ENCODE measurements at regions of chr16 and their contacts with region 1.

Region 1: DNA sequence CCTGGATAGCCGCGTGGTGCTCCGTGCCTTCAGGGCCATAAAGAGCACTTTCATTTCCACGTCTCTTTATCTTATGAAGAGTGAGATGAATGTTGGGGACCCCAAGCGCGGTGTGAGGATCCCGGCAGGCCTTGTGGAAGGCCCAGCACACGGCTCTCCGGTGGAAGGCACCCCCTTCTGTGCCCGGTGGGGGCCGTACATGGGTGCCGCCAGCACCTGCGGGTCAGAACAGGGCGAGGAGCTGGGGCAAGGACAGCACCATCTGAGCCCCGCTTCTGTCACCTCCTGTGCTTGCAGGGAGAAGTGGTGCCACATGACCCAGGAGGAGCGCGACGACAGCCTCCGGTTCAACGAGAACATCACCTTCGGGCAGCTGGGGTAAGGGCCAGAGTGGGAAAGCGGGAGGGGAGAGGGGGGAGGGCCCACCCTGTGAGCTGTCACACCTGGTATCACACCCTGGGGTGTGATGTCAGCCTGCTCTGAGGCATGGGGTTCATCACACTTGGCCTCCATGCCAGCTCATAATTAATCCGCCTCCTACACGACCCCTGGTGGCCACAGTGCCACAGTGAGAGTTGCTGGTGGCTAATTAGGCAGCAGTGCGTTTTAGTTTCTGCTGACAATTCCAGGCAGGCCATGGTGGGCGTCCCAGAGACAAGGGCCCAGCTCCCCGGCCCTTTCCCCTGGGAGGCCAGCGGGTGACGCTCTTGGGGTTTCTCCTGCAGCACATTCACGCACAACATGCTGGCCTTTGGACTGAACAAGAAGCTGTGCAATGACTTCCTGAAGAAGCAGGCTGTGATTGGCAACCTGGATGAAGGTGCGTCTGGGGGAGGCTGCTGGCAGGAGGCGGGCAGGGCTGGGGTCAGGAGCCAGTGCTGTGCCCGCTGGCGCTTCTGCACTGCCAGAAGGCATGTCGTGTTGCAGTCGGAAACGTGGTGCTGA is 25.7 kb downstream of the CIBAR2 start:
- DNase-seq: peak; percentile 70 to 80 (median 75)
- H3K4me3 ChIP-seq: no peak overlapping the region
- H3K4me3 Mint-ChIP-seq: no peak overlapping the region
- H3K27ac ChIP-seq: no peak overlapping the region
- H3K27ac Mint-ChIP-seq: peak overlapping the region in 5 of 7 donors; percentile 24 to 62 (median 41)
- H3K4me1 ChIP-seq: no peaks in the 10 kb centered on the region
- H3K4me1 Mint-ChIP-seq: peaks cover 2 to 11% (median 8%) of the 10 kb centered on the region in 4 donors
- H3K27me3 ChIP-seq: no peaks in the 10 kb centered on the region
- H3K27me3 Mint-ChIP-seq: no peaks in the 10 kb centered on the region

Region 2: DNA sequence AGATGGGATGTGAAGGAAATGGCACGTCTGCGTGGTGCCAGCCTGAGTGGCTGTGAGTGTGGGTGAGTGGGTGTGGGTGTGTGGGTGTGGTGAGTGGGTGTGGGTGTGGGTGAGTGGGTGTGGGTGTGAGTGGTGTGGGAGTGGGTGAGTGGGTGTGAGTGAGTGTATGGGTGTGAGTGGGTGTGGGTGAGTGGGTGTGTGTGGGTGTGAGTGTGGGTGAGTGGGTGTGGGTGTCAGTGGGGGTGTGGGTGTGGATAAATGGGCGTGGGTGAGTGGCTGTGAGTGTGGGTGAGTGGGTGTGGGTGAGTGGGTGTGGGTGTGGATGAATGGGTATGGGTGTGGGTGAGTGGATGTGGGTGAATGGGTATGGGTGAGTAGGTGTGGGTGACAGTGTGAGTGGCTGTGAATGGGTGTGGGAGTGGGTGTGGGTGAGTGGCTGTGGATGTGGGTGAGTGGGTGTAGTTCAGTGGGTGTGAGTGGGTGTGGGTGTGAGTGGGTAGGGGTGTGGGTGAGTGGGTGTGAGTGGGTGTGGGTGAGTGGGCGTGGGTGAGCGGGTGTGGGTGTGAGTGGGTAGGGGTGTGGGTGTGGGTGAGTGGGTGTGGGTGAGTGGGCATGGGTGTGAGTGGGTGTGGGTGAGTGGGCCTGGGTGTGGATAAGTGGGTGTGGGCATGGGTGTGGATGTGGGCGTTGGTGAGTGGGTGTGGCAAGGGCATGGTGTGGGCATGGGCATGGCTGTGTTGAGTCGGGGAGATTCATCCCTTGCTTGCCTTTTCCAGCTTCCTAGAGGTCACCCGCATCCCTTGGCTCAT is 156.1 kb before region 1 on chr16:
- CTCF ChIA-PET with region 1: interaction called, 6 read pairs
- POLR2A ChIA-PET with region 1: no interaction called
- intact Hi-C with region 1: loop called (anchors 2 kb)
- DNase-seq: no peak
- H3K4me3 ChIP-seq: no peak overlapping the region
- H3K4me3 Mint-ChIP-seq: no peak overlapping the region
- H3K27ac ChIP-seq: no peak overlapping the region
- H3K27ac Mint-ChIP-seq: peak overlapping the region in 2 of 7 donors; percentile 2 to 62
- H3K4me1 ChIP-seq: peaks cover 3% of the 10 kb centered on the region
- H3K4me1 Mint-ChIP-seq: peaks cover 0 to 5% (median 2%) of the 10 kb centered on the region in 4 donors
- H3K27me3 ChIP-seq: no peaks in the 10 kb centered on the region
- H3K27me3 Mint-ChIP-seq: no peaks in the 10 kb centered on the region

Region 3: GRCh38 chr16:84970447-84971127 is 116.0 kb before region 1 on chr16:
- CTCF ChIA-PET with region 1: interaction called, 21 read pairs
- POLR2A ChIA-PET with region 1: no interaction called
- intact Hi-C with region 1: no loop called
- DNase-seq: peak; percentile 72 to 81 (median 75)
- H3K4me3 ChIP-seq: no peak overlapping the region
- H3K4me3 Mint-ChIP-seq: peak overlapping the region in 3 of 8 donors; percentile 1 to 41 (median 15)
- H3K27ac ChIP-seq: no peak overlapping the region
- H3K27ac Mint-ChIP-seq: peak overlapping the region in 6 of 7 donors; percentile 22 to 74 (median 64)
- H3K4me1 ChIP-seq: peaks cover 7% of the 10 kb centered on the region
- H3K4me1 Mint-ChIP-seq: peaks cover 4 to 6% (median 5%) of the 10 kb centered on the region in 4 donors
- H3K27me3 ChIP-seq: no peaks in the 10 kb centered on the region
- H3K27me3 Mint-ChIP-seq: no peaks in the 10 kb centered on the region

Region 4: DNA sequence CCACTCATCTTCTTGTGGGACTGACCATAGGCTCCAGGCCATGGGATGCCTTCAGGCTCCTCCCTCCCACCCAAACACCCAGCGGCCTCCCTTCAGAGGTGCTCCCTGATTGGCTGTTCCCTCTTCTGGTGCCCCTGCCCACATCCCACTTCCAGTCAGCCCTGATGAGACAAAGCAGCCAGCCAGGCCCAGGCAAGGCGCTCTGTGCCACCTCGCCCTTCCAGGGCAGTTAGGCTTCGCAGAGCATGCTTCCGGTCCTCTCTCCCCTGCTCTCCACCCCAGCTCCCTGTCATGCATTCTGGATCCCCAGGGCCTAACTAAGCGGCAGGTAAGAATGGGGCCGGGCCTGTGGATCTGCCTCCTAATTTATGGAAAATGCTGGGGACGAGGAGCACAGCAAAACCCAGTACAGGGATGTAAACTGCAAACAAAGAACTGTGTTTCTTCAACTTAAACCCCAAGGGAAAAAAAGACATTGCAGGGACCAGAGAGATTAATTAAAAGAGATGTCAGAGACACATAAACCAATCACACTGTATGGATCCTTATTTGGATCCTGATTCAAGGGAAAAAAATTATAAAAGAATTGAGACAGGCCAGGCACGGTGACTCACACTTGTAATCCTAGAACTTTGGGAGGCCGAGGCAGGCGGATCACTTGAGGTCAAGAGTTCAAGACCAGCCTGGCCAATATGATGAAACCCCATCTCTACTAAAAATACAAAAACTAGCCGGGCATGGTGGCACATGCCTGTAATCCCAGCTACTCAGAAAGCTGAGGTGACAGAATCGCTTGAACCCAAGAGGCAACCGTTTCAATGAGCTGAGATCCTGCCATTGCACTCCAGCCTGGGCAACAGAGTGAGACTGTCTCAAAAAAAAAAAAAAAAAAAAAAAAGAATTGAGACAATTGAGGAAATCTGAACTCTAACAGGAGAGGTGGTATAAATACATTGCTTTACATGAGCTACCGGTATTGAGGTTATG is 101.2 kb before region 1 on chr16:
- CTCF ChIA-PET with region 1: interaction called, 8 read pairs
- POLR2A ChIA-PET with region 1: no interaction called
- intact Hi-C with region 1: loop called (anchors 1 kb)
- DNase-seq: no peak
- H3K4me3 ChIP-seq: no peak overlapping the region
- H3K4me3 Mint-ChIP-seq: peak overlapping the region in 1 of 8 donors; percentile 5
- H3K27ac ChIP-seq: no peak overlapping the region
- H3K27ac Mint-ChIP-seq: peak overlapping the region in 6 of 7 donors; percentile 43 to 90 (median 84)
- H3K4me1 ChIP-seq: peaks cover 11% of the 10 kb centered on the region
- H3K4me1 Mint-ChIP-seq: peaks cover 15 to 18% (median 16%) of the 10 kb centered on the region in 4 donors
- H3K27me3 ChIP-seq: no peaks in the 10 kb centered on the region
- H3K27me3 Mint-ChIP-seq: no peaks in the 10 kb centered on the region

Region 5: GRCh38 chr16:85010931-85011845 is 75.4 kb before region 1 on chr16 and contains the start of gene ZDHHC7:
- CTCF ChIA-PET with region 1: interaction called, 34 read pairs
- POLR2A ChIA-PET with region 1: interaction called, 19 read pairs
- intact Hi-C with region 1: loop called (anchors 1 kb)
- DNase-seq: peak; percentile 82 to 86 (median 84)
- H3K4me3 ChIP-seq: peak within 1 kb of the TSS; percentile 96 to 99
- H3K4me3 Mint-ChIP-seq: peak within 1 kb of the TSS; percentile 96 to 98 (median 98)
- H3K27ac ChIP-seq: peak within 1 kb of the TSS; percentile 93
- H3K27ac Mint-ChIP-seq: peak within 1 kb of the TSS; percentile 94 to 99 (median 99)
- H3K4me1 ChIP-seq: peaks cover 26% of the 10 kb centered on the region
- H3K4me1 Mint-ChIP-seq: peaks cover 22 to 51% (median 38%) of the 10 kb centered on the region in 4 donors
- H3K27me3 ChIP-seq: no peaks in the 10 kb centered on the region
- H3K27me3 Mint-ChIP-seq: peaks cover 0 to 2% of the 10 kb centered on the region in 2 donors
- total RNA-seq, gene ZDHHC7: 33.8 to 35.6 TPM

Region 6: GRCh38 chr16:85055503-85056210 is 31.0 kb before region 1 on chr16:
- CTCF ChIA-PET with region 1: interaction called, 41 read pairs
- POLR2A ChIA-PET with region 1: interaction called, 25 read pairs
- intact Hi-C with region 1: loop called (anchors 1 kb)
- DNase-seq: peak; percentile 81 to 94 (median 85)
- H3K4me3 ChIP-seq: peak overlapping the region; percentile 24 to 59
- H3K4me3 Mint-ChIP-seq: peak overlapping the region; percentile 71 to 92 (median 84)
- H3K27ac ChIP-seq: peak overlapping the region; percentile 57
- H3K27ac Mint-ChIP-seq: peak overlapping the region; percentile 84 to 98 (median 95)
- H3K4me1 ChIP-seq: peaks cover 43% of the 10 kb centered on the region
- H3K4me1 Mint-ChIP-seq: peaks cover 33 to 47% (median 39%) of the 10 kb centered on the region in 4 donors
- H3K27me3 ChIP-seq: no peaks in the 10 kb centered on the region
- H3K27me3 Mint-ChIP-seq: no peaks in the 10 kb centered on the region

Region 7: GRCh38 chr16:85072947-85073346 is 13.7 kb before region 1 on chr16:
- CTCF ChIA-PET with region 1: interaction called, 12 read pairs
- POLR2A ChIA-PET with region 1: no interaction called
- intact Hi-C with region 1: no loop called
- DNase-seq: no peak
- H3K4me3 ChIP-seq: no peak overlapping the region
- H3K4me3 Mint-ChIP-seq: no peak overlapping the region
- H3K27ac ChIP-seq: no peak overlapping the region
- H3K27ac Mint-ChIP-seq: peak overlapping the region in 1 of 7 donors; percentile 36
- H3K4me1 ChIP-seq: no peaks in the 10 kb centered on the region
- H3K4me1 Mint-ChIP-seq: no peaks in the 10 kb centered on the region
- H3K27me3 ChIP-seq: no peaks in the 10 kb centered on the region
- H3K27me3 Mint-ChIP-seq: no peaks in the 10 kb centered on the region

Measured in CD4-positive, alpha-beta memory T cell (primary cell).